ENCODE measurements at regions of chr12 and their contacts with region 1.

Region 1: DNA sequence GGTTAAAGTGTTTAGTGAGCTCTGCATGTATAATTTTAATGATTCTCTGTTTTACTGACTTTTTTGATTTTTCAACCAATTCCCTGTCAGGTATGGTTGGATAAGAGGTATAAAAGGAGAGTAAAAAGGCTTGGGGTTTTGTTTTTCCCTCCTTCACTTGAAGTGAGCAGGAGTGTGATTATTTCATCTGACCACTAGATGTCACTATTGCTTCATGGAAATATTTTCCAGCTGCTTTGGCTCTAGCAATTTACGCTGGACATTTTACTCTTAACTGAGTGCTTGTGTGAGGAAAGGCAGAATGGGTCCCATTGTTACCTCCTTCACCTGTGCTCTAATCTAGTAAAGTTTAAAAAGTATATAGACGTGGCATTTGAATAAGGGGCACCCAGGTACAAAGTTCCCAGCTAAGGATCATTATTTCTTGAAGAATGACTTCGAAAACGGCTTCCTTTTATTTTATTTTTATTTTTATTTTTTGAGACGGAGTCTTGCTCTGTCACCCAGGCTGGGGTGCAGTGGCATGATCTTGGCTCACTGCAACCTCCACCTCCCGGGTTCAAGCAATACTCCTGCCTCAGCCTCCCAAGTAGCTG is 66.5 kb downstream of the TBC1D30 start:
- DNase-seq: no peak
- H3K4me3 Mint-ChIP-seq: no peak overlapping the region
- H3K27ac Mint-ChIP-seq: no peak overlapping the region
- H3K4me1 Mint-ChIP-seq: peaks cover 1% of the 10 kb centered on the region
- H3K27me3 Mint-ChIP-seq: peaks cover 19% of the 10 kb centered on the region

Region 2: GRCh38 chr12:64796208-64796845 is 94.6 kb before region 1 on chr12:
- CTCF ChIA-PET with region 1: interaction called, 8 read pairs
- POLR2A ChIA-PET with region 1: no interaction called
- intact Hi-C with region 1: loop called (anchors 2 kb)
- DNase-seq: peak; percentile 53
- H3K4me3 Mint-ChIP-seq: no peak overlapping the region
- H3K27ac Mint-ChIP-seq: no peak overlapping the region
- H3K4me1 Mint-ChIP-seq: no peaks in the 10 kb centered on the region
- H3K27me3 Mint-ChIP-seq: peaks cover 13% of the 10 kb centered on the region

Region 3: DNA sequence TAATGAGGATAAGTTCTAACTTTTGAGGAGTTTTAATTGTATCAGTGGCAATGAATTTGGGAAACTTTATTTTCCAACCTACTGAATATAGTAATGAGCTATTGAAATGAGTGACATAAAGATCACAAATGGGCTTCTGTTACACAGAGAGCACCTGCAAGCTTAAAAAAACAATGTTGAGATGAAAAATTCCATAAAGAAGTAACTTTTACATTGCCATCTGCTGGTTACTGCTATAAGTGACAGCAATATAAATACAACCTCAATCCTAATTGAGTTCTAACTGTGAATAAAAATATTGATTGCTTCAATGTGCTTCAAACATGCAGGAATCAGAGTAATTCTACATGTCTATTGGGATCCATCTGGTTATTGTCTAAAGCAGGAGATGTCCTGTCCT is 216.0 kb after region 1 on chr12:
- CTCF ChIA-PET with region 1: interaction called, 13 read pairs
- POLR2A ChIA-PET with region 1: no interaction called
- intact Hi-C with region 1: no loop called
- DNase-seq: no peak
- H3K4me3 Mint-ChIP-seq: no peak overlapping the region
- H3K27ac Mint-ChIP-seq: no peak overlapping the region
- H3K4me1 Mint-ChIP-seq: no peaks in the 10 kb centered on the region
- H3K27me3 Mint-ChIP-seq: peaks cover 8% of the 10 kb centered on the region

Region 4: DNA sequence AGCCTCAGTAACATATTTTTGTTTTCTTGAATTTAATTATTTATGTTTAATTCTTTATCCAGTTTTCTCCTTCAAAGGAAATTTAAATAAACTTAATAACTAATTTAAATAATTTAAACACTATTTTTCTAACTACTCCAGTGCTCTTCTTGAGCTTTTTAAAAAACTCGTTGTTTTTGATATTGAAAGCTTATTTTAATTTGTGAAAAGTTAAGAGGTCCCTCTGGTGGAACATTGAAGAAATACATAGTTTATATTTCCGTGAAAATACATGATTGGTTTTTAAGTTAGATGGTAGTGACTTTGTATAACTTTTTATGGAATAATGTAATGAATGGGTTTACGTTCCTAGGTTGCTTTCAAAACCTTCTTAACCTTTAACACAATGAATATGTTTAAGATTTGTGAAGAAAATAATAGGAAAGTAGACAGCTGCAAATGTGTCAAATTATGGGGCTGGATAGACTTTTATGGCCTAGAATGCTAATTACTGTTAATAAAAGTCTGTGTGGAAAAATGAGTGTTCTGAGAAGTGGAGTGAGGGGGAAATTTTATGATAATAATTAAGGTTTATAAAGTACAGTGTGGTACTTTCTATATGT is 341.6 kb after region 1 on chr12:
- CTCF ChIA-PET with region 1: interaction called, 54 read pairs
- POLR2A ChIA-PET with region 1: no interaction called
- intact Hi-C with region 1: loop called (anchors 1 kb)
- DNase-seq: no peak
- H3K4me3 Mint-ChIP-seq: no peak overlapping the region
- H3K27ac Mint-ChIP-seq: no peak overlapping the region
- H3K4me1 Mint-ChIP-seq: peaks cover 6% of the 10 kb centered on the region
- H3K27me3 Mint-ChIP-seq: no peaks in the 10 kb centered on the region

Region 5: GRCh38 chr12:65986047-65986446 is 1095.1 kb after region 1 on chr12:
- CTCF ChIA-PET with region 1: interaction called, 4 read pairs
- POLR2A ChIA-PET with region 1: no interaction called
- intact Hi-C with region 1: loop called (anchors 1 kb)
- DNase-seq: no peak
- H3K4me3 Mint-ChIP-seq: no peak overlapping the region
- H3K27ac Mint-ChIP-seq: no peak overlapping the region
- H3K4me1 Mint-ChIP-seq: no peaks in the 10 kb centered on the region
- H3K27me3 Mint-ChIP-seq: no peaks in the 10 kb centered on the region

Measured in activated CD4-positive, alpha-beta memory T cell treated with anti-CD3 and anti-CD28 coated beads for 36 hours (primary cell).